Adrenal gland (tissue), 19 donors: ENCODE measurements at regions of chr11 and their contacts with region 1.

Region 1: GRCh38 chr11:19553683-19554333 is 158.8 kb upstream of the NAV2 start:
- DNase-seq: peak; percentile 76 to 92 (median 84)
- H3K4me3 ChIP-seq: no peak overlapping the region
- H3K27ac ChIP-seq: no peak overlapping the region
- H3K4me1 ChIP-seq: no peaks in the 10 kb centered on the region
- H3K27me3 ChIP-seq: no peaks in the 10 kb centered on the region
- CTCF ChIP-seq: peak; percentile 80 to 93 (median 88)
- POLR2A ChIP-seq: no peak

Region 2: DNA sequence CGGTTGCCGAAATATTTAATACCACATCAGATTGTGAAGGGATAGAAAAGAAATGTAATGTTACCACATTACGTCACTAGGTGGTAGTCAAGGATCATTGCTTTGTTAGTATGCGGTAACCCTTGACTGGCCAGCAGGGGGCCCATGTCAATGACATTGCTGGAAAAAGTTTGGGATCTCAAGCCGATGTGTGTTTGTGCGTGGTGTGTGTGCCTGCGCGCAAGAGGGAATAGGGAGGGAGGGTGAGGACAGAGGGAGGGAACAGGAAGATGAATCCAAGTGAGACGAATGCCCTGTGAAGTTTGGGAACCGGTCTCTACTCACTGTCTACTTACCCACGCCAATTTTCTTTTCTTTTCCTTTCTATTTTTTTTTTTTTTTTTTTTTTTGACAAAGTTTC is 482.6 kb before region 1 on chr11:
- intact Hi-C with region 1: loop called (anchors 5 kb)
- DNase-seq: peak; percentile 68 to 89 (median 80)
- H3K4me3 ChIP-seq: no peak overlapping the region
- H3K27ac ChIP-seq: no peak overlapping the region
- H3K4me1 ChIP-seq: no peaks in the 10 kb centered on the region
- H3K27me3 ChIP-seq: no peaks in the 10 kb centered on the region
- CTCF ChIP-seq: peak; percentile 70 to 100 (median 94)
- POLR2A ChIP-seq: no peak

Region 3: GRCh38 chr11:19259487-19260345 is 294.1 kb before region 1 on chr11:
- intact Hi-C with region 1: loop called (anchors 5 to 10 kb)
- DNase-seq: peak; percentile 51 to 89 (median 77)
- H3K4me3 ChIP-seq: peak overlapping the region in 1 of 4 donors; percentile 42
- H3K27ac ChIP-seq: no peak overlapping the region
- H3K4me1 ChIP-seq: peaks cover 0 to 4% of the 10 kb centered on the region in 2 donors
- H3K27me3 ChIP-seq: no peaks in the 10 kb centered on the region
- CTCF ChIP-seq: peak; percentile 80 to 97 (median 84)
- POLR2A ChIP-seq: no peak

Region 4: DNA sequence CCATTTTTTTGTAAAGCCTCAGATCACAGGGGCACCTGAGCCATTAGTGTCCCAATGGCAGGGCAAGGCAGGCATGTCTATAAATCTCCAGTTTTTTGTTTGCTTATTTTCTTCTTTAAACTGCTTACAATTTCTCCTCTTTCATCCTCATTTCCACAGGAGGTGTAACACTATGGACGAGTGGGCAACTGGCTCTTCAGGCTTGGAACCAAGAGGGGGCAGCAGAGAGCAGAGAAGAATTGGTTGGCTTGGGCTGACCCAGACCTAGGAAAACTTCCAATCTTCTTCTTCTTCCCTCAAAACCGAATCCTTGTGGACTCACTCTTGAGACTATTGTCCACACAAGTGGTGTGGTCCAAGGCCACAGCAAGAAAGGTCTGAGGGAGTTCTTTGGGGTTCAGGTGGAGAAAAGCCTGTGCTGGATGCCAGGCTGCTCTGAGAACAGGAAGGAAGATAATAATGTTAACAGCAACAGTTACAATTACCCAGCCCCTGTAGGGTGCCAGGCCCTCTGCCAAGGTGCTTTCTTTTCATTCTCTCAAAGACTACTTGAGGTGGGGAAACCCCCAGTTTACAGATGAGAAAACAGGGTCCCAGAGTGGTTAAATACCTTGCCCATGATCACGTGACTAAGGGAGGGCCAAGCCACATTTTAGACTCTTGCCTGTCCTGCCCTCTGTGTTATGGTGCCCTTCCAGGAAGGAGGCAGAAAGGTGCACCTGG is 242.3 kb before region 1 on chr11:
- intact Hi-C with region 1: loop called (anchors 2 to 5 kb)
- DNase-seq: peak; percentile 58 to 87 (median 77)
- H3K4me3 ChIP-seq: no peak overlapping the region
- H3K27ac ChIP-seq: no peak overlapping the region
- H3K4me1 ChIP-seq: peaks cover 0 to 5% of the 10 kb centered on the region in 2 donors
- H3K27me3 ChIP-seq: no peaks in the 10 kb centered on the region
- CTCF ChIP-seq: peak; percentile 72 to 89 (median 82)
- POLR2A ChIP-seq: no peak

Region 5: GRCh38 chr11:19614370-19614940 is 60.6 kb after region 1 on chr11:
- intact Hi-C with region 1: no loop called
- DNase-seq: no peak
- H3K4me3 ChIP-seq: no peak overlapping the region
- H3K27ac ChIP-seq: no peak overlapping the region
- H3K4me1 ChIP-seq: no peaks in the 10 kb centered on the region
- H3K27me3 ChIP-seq: no peaks in the 10 kb centered on the region
- CTCF ChIP-seq: no peak
- POLR2A ChIP-seq: no peak

Region 6: DNA sequence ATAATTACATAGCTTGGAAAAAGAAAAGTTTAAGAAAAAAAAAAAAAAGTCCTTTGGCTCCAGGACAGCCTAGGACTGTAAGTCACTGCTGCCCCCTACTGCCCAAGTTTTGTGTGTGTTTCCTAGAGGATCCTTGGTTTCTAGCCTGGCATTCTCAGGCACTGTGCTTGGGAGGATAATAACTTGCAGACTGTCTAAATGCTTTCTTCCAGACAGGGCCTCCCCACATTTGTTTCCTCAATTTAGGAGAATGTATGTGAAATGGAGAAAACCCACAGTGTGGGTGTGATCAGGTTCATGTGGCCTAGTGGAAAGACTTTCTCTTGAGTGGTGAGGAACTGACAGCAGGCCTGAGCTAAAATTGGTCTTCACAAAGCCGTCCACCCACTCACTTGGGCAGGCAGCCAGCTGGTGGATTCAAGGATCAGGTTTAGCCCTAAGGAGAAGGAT is 349.8 kb after region 1 on chr11:
- intact Hi-C with region 1: loop called in 1 of 2 experiments (anchors 5 kb)
- DNase-seq: peak; percentile 71 to 93 (median 83)
- H3K4me3 ChIP-seq: no peak overlapping the region
- H3K27ac ChIP-seq: no peak overlapping the region
- H3K4me1 ChIP-seq: peaks cover 0 to 9% of the 10 kb centered on the region in 2 donors
- H3K27me3 ChIP-seq: no peaks in the 10 kb centered on the region
- CTCF ChIP-seq: peak; percentile 64 to 80 (median 74)
- POLR2A ChIP-seq: no peak